PC-3 (cell line): ENCODE measurements at regions of chr18 and their contacts with region 1.

Region 1: GRCh38 chr18:23384778-23385736 is 68.0 kb upstream of the RIOK3 start:
- DNase-seq: no peak
- ATAC-seq: no peak
- H3K4me3 ChIP-seq: no peak overlapping the region
- H3K27ac ChIP-seq: no peak overlapping the region
- H3K4me1 ChIP-seq: peaks cover 12% of the 10 kb centered on the region
- H3K27me3 ChIP-seq: no peaks in the 10 kb centered on the region
- CTCF ChIP-seq: no peak

Region 2: GRCh38 chr18:23398401-23398800 is 13.3 kb after region 1 on chr18:
- CTCF ChIA-PET with region 1: no interaction called
- POLR2A ChIA-PET with region 1: no interaction called
- intact Hi-C with region 1: loop called (anchors 1 kb)
- DNase-seq: no peak
- ATAC-seq: no peak
- H3K4me3 ChIP-seq: no peak overlapping the region
- H3K27ac ChIP-seq: no peak overlapping the region
- H3K4me1 ChIP-seq: no peaks in the 10 kb centered on the region
- H3K27me3 ChIP-seq: no peaks in the 10 kb centered on the region
- CTCF ChIP-seq: no peak